Activated naive CD4-positive, alpha-beta T cell treated with anti-CD3 and anti-CD28 coated beads for 36 hours (primary cell): ENCODE measurements at regions of chr2 and their contacts with region 1.

Region 1: DNA sequence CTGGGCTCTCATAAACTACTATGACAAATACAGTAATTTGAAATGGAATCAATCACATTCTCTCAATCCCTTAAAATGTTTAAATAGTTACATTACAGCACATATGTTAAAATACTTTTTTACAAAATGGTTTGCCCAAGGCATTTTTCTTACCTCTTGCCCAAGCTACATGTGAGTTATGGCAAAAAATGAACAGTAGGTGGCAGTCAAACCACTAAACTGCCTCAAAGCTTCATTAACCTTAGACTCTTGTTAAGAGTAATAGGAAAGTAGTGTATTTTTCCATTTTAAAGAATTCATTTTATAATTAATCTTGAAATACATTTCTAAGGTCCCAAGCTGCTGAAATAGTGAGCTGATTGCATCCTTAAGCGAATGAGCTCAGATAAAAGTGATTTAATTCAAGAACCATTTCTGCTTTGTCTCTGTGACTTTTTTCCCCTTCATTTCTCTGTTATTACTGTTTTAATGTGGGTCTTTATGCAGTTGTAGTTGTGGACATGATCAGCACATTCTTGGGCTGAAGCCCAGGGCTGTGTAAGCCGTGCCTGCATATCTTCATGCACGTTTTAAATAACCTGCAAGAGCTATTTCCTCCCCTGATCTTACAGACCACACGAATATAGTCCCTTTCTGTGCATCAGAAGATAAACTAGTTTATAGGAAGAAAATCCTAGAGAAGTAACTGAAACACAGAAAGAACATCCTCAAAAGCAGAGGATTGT is 311.8 kb downstream of the LNPK start:
- DNase-seq: peak; percentile 56
- H3K4me3 Mint-ChIP-seq: no peak overlapping the region
- H3K27ac Mint-ChIP-seq: no peak overlapping the region
- H3K4me1 Mint-ChIP-seq: no peaks in the 10 kb centered on the region
- H3K27me3 Mint-ChIP-seq: peaks cover 26% of the 10 kb centered on the region

Region 2: DNA sequence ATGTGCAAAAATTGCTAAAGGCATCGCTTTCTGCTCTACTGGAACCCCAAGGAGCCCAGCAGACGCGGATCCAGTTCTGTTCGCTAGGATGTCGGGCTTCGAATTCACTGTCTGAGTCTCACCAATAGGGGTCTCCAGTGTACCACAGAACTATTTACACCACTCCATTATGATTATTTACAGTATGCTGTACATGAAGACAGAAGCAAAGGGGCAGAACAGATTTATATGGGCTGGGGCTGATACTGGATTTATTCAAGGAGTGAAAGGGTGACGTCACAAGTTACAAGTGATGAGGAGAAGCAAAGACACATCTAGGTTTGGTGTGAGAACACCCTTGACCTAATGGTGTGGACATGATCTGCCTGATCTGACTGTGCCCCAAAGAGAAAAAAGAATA is 323.5 kb before region 1 on chr2:
- CTCF ChIA-PET with region 1: interaction called, 6 read pairs
- intact Hi-C with region 1: loop called (anchors 1 kb)
- DNase-seq: peak; percentile 35
- H3K4me3 Mint-ChIP-seq: no peak overlapping the region
- H3K27ac Mint-ChIP-seq: no peak overlapping the region
- H3K4me1 Mint-ChIP-seq: no peaks in the 10 kb centered on the region
- H3K27me3 Mint-ChIP-seq: peaks cover 20% of the 10 kb centered on the region

Region 3: GRCh38 chr2:176126929-176127773 is 436.9 kb after region 1 on chr2:
- CTCF ChIA-PET with region 1: no interaction called
- intact Hi-C with region 1: no loop called
- DNase-seq: peak; percentile 81
- H3K4me3 Mint-ChIP-seq: no peak overlapping the region
- H3K27ac Mint-ChIP-seq: no peak overlapping the region
- H3K4me1 Mint-ChIP-seq: peaks cover 25% of the 10 kb centered on the region
- H3K27me3 Mint-ChIP-seq: peaks cover 68% of the 10 kb centered on the region